PC-9 (cell line): ENCODE measurements at regions of chr16 and their contacts with region 1.

Region 1: GRCh38 chr16:57648590-57649442 is 19.3 kb upstream of the ADGRG3 start:
- DNase-seq: peak; percentile 67 to 86
- H3K4me3 ChIP-seq: no peak overlapping the region
- H3K27ac ChIP-seq: no peak overlapping the region
- H3K4me1 ChIP-seq: peaks cover 39% of the 10 kb centered on the region
- H3K27me3 ChIP-seq: no peaks in the 10 kb centered on the region
- CTCF ChIP-seq: peak; percentile 100

Region 2: GRCh38 chr16:57394444-57394843 is 254.4 kb before region 1 on chr16:
- CTCF ChIA-PET with region 1: no interaction called
- POLR2A ChIA-PET with region 1: no interaction called
- intact Hi-C with region 1: no loop called
- DNase-seq: peak; percentile 60 to 64
- H3K4me3 ChIP-seq: no peak overlapping the region
- H3K27ac ChIP-seq: no peak overlapping the region
- H3K4me1 ChIP-seq: peaks cover 33% of the 10 kb centered on the region
- H3K27me3 ChIP-seq: no peaks in the 10 kb centered on the region
- CTCF ChIP-seq: no peak

Region 3: DNA sequence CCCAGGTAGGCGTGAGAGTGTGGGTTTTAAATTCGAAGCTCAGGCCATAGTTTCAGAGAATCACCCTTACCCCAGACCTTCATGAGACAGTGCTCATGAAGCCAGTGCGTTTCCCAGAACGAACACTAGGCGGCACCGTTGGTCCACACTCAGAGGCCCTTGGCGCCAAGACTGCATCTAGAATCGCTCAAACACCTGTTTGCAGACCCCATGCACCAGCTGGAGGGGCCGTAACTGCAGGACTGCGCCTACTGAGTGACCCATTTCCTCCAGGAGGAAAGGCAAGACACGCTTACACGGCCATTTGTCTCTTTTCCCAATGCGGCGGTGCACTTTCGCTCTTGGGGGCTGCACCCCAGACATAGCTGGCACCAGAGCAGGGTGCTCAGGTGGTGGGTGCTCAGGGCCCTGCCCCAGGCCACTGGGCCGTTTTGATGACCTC is 72.4 kb before region 1 on chr16:
- CTCF ChIA-PET with region 1: interaction called, 12 read pairs
- POLR2A ChIA-PET with region 1: no interaction called
- intact Hi-C with region 1: loop called (anchors 1 kb)
- DNase-seq: peak; percentile 52 to 69
- H3K4me3 ChIP-seq: no peak overlapping the region
- H3K27ac ChIP-seq: no peak overlapping the region
- H3K4me1 ChIP-seq: no peaks in the 10 kb centered on the region
- H3K27me3 ChIP-seq: no peaks in the 10 kb centered on the region
- CTCF ChIP-seq: peak; percentile 95

Region 4: DNA sequence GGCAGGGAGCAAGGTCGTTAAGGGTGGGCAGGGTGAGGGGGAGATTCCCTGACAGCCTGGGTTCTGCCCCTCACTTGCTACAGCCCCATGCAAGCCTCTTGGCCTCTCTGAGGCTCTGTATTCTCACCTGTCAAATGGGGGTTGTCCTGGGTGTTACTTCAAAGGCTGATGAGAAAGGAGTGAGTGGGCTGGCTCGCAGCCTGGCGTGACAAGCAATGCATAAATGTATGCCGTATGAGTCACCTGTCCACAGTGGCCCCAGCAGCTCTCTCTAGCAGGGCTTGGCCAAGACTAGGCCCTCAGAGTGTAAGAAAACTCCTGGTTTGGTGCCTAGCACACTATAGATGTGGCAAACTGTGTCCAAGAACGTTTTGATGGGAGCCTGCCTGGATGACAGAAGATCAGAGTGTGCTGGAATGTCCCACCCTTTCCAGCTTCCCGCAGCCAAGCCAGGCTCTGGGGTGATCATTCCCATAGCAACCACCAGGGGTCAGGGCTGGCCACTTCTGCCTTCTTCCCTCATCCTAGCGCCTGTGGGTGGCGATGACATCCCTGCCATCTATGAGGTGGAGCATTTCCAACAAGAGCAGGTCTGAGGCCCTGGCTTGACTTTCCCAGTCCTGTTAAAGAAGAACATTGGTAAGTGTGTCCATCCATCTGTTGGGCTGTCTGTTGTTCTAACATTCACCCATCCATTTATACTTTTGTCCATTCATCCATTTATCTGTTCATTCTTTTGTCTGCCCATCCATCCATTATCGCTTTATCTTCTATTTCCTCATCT is 57.5 kb before region 1 on chr16:
- CTCF ChIA-PET with region 1: interaction called, 9 read pairs
- POLR2A ChIA-PET with region 1: no interaction called
- intact Hi-C with region 1: loop called (anchors 1 kb)
- DNase-seq: peak; percentile 79
- H3K4me3 ChIP-seq: no peak overlapping the region; the same call in 1 of the 2 replicates
- H3K27ac ChIP-seq: peak overlapping the region; percentile 80
- H3K4me1 ChIP-seq: peaks cover 16% of the 10 kb centered on the region
- H3K27me3 ChIP-seq: no peaks in the 10 kb centered on the region
- CTCF ChIP-seq: peak; percentile 97

Region 5: GRCh38 chr16:57600048-57600835 is 48.6 kb before region 1 on chr16:
- CTCF ChIA-PET with region 1: interaction called, 7 read pairs
- POLR2A ChIA-PET with region 1: no interaction called
- intact Hi-C with region 1: loop called (anchors 1 kb)
- DNase-seq: peak in 1 of 2 experiments; percentile 74
- H3K4me3 ChIP-seq: no peak overlapping the region
- H3K27ac ChIP-seq: no peak overlapping the region
- H3K4me1 ChIP-seq: peaks cover 13% of the 10 kb centered on the region
- H3K27me3 ChIP-seq: no peaks in the 10 kb centered on the region
- CTCF ChIP-seq: peak; percentile 89

Region 6: GRCh38 chr16:57611184-57611583 is 37.6 kb before region 1 on chr16:
- CTCF ChIA-PET with region 1: no interaction called
- POLR2A ChIA-PET with region 1: no interaction called
- intact Hi-C with region 1: no loop called
- DNase-seq: peak in 1 of 2 experiments; percentile 65
- H3K4me3 ChIP-seq: no peak overlapping the region
- H3K27ac ChIP-seq: no peak overlapping the region
- H3K4me1 ChIP-seq: peaks cover 30% of the 10 kb centered on the region
- H3K27me3 ChIP-seq: no peaks in the 10 kb centered on the region
- CTCF ChIP-seq: no peak

Region 7: DNA sequence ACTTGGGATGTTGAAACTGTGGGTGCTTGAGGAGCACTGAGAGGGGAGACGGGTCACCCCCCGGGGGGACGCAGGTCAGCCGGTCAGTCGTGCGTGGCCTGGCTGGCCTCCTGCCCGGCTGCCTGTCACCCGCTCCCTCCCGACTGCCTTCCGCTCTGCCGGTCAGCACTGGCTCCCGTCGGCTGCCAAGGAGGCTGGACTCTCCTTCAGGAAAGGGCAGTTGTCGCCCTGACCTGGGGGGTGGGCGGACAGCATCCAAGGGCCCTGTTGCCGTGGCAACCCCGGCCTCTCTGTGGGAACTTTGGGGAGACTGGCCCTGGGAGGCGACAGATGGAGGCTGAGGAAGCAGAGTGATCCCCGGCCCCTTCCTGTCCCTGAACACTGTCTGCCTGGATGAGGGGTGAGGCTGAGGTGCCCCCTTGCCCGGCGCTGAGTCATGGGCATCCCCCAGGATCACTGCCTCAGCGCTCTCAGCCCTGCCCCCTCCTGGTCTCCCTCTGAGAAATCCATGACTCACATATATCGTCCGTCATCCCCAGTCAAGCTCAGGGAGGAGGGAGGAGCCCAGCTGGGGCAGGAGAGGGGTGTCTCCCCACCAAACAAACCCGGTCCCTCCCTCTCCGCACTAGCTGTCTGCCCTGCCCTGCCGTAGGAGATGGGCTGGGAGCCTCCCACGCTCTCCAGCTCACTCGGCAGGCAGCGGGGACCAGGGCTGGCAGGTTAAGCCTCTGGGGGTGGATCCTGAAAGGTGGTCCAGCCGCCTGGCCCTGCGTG is 20.6 kb before region 1 on chr16 and contains the start of gene ADGRG1:
- CTCF ChIA-PET with region 1: interaction called, 11 read pairs
- POLR2A ChIA-PET with region 1: interaction called, 13 read pairs
- intact Hi-C with region 1: loop called (anchors 2 kb)
- DNase-seq: peak; percentile 86 to 89
- H3K4me3 ChIP-seq: peak within 1 kb of the TSS; percentile 44; the same call in 1 of the 2 replicates
- H3K27ac ChIP-seq: peak within 1 kb of the TSS; percentile 75
- H3K4me1 ChIP-seq: peaks cover 97% of the 10 kb centered on the region
- H3K27me3 ChIP-seq: no peaks in the 10 kb centered on the region
- CTCF ChIP-seq: peak; percentile 28; the same call in 1 of the 2 replicates
- total RNA-seq, gene ADGRG1: 105 and 131 TPM in 2 replicates

Region 8: DNA sequence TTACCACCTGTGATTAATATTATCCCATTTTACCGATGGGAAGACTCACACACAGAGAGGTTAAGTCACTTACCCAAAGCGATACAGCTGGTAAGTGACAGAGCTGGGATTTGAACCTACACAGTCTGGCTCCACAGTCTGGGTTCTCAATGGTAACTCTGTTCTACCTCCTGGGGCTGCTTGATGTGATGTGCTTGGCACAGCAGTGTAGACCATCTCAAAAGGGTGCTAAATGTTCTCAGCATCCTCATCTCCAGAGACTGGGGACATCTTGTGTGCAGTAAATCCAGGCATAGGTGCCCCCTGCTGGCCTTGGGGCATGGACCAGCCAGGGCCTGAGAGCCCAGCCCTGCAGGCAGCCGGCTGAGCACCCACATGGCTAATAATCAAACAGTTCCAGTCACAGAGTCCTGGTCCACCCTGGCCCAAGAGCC is 71.3 kb after region 1 on chr16:
- CTCF ChIA-PET with region 1: no interaction called
- POLR2A ChIA-PET with region 1: no interaction called
- intact Hi-C with region 1: loop called (anchors 1 kb)
- DNase-seq: peak in 1 of 2 experiments; percentile 59
- H3K4me3 ChIP-seq: no peak overlapping the region
- H3K27ac ChIP-seq: no peak overlapping the region
- H3K4me1 ChIP-seq: no peaks in the 10 kb centered on the region
- H3K27me3 ChIP-seq: peaks cover 10% of the 10 kb centered on the region; the same call in 1 of the 2 replicates
- CTCF ChIP-seq: peak; percentile 75

Region 9: DNA sequence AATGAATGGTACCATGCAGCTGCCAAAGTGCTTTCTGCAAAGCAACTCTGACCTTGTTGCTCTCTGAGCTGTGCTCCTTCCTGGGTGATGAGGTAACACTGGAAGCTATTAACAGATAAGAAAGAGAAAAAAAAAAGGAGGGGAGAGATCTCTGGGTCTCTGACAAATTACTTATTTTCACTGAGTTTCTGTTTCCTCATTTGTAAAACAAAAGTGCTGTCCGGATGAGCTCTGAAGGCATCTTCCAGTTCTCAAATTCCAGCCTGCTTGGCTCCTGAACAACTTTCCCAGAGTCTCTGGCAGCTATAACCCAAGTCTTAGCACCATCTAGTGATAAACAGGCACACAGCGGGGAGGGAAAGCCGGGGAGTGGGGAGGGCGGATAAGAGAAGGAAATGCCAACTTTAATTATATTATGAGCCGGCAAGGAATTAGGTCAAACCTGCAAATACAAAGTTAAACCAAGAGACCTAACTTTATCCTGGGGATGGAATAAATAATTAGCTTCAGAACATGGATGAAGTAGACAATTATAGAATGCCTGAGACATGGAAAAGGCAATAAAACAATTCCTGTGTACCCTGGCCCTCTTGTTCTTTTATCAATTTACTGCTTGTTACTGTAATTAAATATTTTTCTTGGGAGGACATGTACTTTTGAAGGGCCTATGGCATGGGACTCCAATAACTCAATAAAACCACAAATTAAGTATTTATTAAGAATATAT is 214.8 kb after region 1 on chr16:
- CTCF ChIA-PET with region 1: interaction called, 3 read pairs
- POLR2A ChIA-PET with region 1: no interaction called
- intact Hi-C with region 1: loop called (anchors 1 kb)
- DNase-seq: peak; percentile 64 to 78
- H3K4me3 ChIP-seq: no peak overlapping the region
- H3K27ac ChIP-seq: peak overlapping the region; percentile 41
- H3K4me1 ChIP-seq: peaks cover 40% of the 10 kb centered on the region
- H3K27me3 ChIP-seq: no peaks in the 10 kb centered on the region
- CTCF ChIP-seq: peak; percentile 63